ENCODE measurements at regions of chr3 and their contacts with region 1.

Region 1: GRCh38 chr3:23834082-23834870 is 28.5 kb downstream of the UBE2E1 start:
- DNase-seq: no peak
- ATAC-seq: no peak
- H3K4me3 ChIP-seq: no peak overlapping the region
- H3K4me3 Mint-ChIP-seq: no peak overlapping the region
- H3K27ac ChIP-seq: no peak overlapping the region
- H3K27ac Mint-ChIP-seq: no peak overlapping the region
- H3K4me1 ChIP-seq: peaks cover 55 to 64% of the 10 kb centered on the region in 2 donors
- H3K4me1 Mint-ChIP-seq: peaks cover 69% of the 10 kb centered on the region
- H3K27me3 ChIP-seq: no peaks in the 10 kb centered on the region
- H3K27me3 Mint-ChIP-seq: no peaks in the 10 kb centered on the region
- CTCF ChIP-seq: peak; percentile 28

Region 2: GRCh38 chr3:23490459-23490858 is 343.8 kb before region 1 on chr3:
- CTCF ChIA-PET with region 1: no interaction called
- POLR2A ChIA-PET with region 1: no interaction called
- intact Hi-C with region 1: no loop called
- DNase-seq: no peak
- ATAC-seq: no peak
- H3K4me3 ChIP-seq: no peak overlapping the region
- H3K4me3 Mint-ChIP-seq: no peak overlapping the region
- H3K27ac ChIP-seq: no peak overlapping the region
- H3K27ac Mint-ChIP-seq: no peak overlapping the region
- H3K4me1 ChIP-seq: peaks cover 0 to 5% of the 10 kb centered on the region in 2 donors
- H3K4me1 Mint-ChIP-seq: peaks cover 27% of the 10 kb centered on the region
- H3K27me3 ChIP-seq: no peaks in the 10 kb centered on the region
- H3K27me3 Mint-ChIP-seq: no peaks in the 10 kb centered on the region
- CTCF ChIP-seq: no peak

Region 3: DNA sequence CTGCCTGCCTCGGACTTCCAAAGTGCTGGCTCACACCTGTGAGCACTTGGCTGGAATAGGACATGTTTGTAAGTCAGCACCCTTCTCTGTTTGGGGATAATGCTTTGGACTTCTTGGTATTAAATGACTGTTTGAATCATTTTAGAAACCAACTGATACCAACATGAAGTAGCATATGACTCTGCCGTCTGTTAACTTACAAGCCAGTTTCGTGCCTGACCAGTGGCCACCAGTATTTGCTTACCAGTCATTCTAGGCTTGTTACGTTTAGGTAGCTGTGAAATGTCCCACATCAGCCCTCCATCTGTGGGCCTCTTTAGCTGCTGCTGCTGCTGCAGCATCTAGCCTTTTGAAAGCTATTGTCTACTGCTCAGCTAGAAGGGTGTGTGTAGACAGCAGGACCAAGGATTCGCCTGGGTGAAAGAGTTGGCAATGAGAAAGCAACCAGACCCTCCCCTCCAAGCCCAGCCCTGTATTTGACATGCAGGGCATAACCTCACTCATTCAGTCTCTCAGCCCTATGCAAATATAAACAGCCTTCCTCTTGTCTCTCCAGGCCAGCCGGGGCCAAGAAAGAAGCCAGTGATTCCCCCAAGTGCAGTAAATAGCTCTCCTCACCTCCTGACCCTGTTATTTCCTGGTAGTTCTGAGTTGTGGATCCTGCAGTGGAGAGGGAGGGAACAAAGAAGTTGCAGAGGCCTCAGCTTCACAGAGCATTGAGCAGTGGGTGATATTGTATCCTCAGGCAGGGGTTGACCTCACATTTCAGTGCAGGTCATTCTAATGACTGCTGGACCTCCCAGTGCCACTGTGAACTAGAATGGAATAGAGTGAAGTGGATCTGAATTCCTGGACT is 31.5 kb after region 1 on chr3:
- CTCF ChIA-PET with region 1: interaction called, 11 read pairs
- POLR2A ChIA-PET with region 1: no interaction called
- intact Hi-C with region 1: no loop called
- DNase-seq: no peak
- ATAC-seq: peak; percentile 17
- H3K4me3 ChIP-seq: no peak overlapping the region
- H3K4me3 Mint-ChIP-seq: no peak overlapping the region
- H3K27ac ChIP-seq: no peak overlapping the region
- H3K27ac Mint-ChIP-seq: no peak overlapping the region
- H3K4me1 ChIP-seq: peaks cover 7 to 10% of the 10 kb centered on the region in 2 donors
- H3K4me1 Mint-ChIP-seq: peaks cover 43% of the 10 kb centered on the region
- H3K27me3 ChIP-seq: no peaks in the 10 kb centered on the region
- H3K27me3 Mint-ChIP-seq: no peaks in the 10 kb centered on the region
- CTCF ChIP-seq: no peak

Region 4: DNA sequence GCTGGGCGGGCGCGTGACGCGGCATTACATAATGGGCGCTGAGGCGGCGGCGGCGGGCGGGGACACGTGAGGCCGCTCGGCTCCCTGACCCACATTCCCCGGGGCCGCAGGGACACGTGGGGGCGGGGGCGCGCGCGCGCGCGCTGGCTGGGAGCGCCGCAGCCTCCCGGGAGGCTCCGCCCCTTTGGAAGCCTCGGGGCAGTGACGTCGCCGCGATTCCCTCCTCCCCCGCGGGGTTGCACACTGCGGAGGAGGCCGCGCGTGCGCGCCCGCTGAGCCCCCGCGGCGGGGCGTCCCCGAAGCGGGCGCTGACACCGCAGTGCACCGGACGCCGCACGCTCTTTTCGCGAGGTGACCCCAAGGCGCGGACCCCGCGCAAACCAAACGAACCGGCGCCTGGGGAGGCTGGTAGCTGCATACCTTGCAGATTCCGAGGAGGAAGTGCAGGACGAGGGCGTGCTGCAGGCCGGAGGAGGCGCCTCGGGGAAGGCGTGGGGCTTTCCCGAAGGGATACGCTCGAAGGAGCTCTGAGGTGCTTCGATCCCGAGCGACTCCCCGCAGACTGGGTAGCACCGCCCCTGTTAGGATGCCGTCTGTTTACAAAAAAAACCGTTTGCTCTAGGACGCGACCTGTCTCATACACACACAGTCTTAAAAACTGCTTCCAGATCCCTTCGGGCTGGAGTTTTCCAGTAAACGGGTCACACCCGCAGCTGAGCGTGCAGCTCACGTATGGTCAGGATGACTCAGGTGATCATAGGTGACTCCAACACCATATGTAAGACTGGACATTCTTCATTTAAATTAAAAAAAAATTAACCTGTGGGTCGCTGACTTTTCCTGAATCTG is 111.9 kb after region 1 on chr3:
- CTCF ChIA-PET with region 1: no interaction called
- POLR2A ChIA-PET with region 1: no interaction called
- intact Hi-C with region 1: loop called (anchors 5 kb)
- DNase-seq: peak; percentile 99
- ATAC-seq: peak; percentile 77
- H3K4me3 ChIP-seq: peak overlapping the region; percentile 49 to 88 (median 84)
- H3K4me3 Mint-ChIP-seq: peak overlapping the region; percentile 93
- H3K27ac ChIP-seq: peak overlapping the region; percentile 83
- H3K27ac Mint-ChIP-seq: peak overlapping the region; percentile 92
- H3K4me1 ChIP-seq: peaks cover 30 to 33% of the 10 kb centered on the region in 2 donors
- H3K4me1 Mint-ChIP-seq: peaks cover 48% of the 10 kb centered on the region
- H3K27me3 ChIP-seq: no peaks in the 10 kb centered on the region
- H3K27me3 Mint-ChIP-seq: no peaks in the 10 kb centered on the region
- CTCF ChIP-seq: no peak

Region 5: GRCh38 chr3:24237971-24238767 is 403.9 kb after region 1 on chr3:
- CTCF ChIA-PET with region 1: interaction called, 5 read pairs
- POLR2A ChIA-PET with region 1: no interaction called
- intact Hi-C with region 1: loop called (anchors 5 kb)
- DNase-seq: peak; percentile 72
- ATAC-seq: peak; percentile 85
- H3K4me3 ChIP-seq: no peak overlapping the region
- H3K4me3 Mint-ChIP-seq: no peak overlapping the region
- H3K27ac ChIP-seq: no peak overlapping the region
- H3K27ac Mint-ChIP-seq: no peak overlapping the region
- H3K4me1 ChIP-seq: no peaks in the 10 kb centered on the region
- H3K4me1 Mint-ChIP-seq: peaks cover 4% of the 10 kb centered on the region
- H3K27me3 ChIP-seq: no peaks in the 10 kb centered on the region
- H3K27me3 Mint-ChIP-seq: no peaks in the 10 kb centered on the region
- CTCF ChIP-seq: peak; percentile 59